ENCODE measurements at regions of chrX and their contacts with region 1.

Region 1: DNA sequence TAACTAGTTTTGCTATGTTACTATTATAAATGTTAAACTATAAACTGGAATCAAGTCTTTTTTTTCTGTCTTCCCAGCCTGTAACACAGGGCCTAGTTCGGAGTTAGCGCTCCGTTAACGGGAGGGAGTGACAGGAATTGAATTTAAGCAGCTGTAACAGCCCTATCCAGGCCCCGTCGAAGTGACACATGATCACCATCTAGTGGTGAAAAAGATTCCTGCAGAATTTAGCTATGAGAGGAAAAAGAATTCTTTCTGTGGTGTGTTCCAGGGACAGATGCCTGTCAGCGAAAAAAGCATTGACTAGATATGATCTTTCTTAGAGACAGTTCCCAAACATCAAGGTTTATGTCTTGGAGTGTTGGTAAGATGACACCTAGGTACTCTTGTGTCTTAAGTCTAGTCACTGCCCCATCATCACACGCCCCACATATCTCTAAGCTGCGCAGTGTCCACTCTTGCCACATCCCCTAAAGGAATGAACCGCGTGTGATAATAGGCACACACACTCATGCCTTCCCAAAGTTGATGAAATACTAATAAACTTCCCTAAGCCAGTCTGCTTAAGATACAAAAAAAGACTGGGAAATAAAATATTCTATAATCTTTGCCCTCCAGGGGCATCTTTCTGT is 2.0 kb downstream of the GAB3 start:
- DNase-seq: peak; percentile 50
- H3K4me3 Mint-ChIP-seq: peak overlapping the region; percentile 68
- H3K27ac Mint-ChIP-seq: peak overlapping the region; percentile 31
- H3K4me1 Mint-ChIP-seq: peaks cover 35% of the 10 kb centered on the region
- H3K27me3 Mint-ChIP-seq: peaks cover 8% of the 10 kb centered on the region

Region 2: GRCh38 chrX:154712781-154713740 is 35.8 kb before region 1 on chrX:
- CTCF ChIA-PET with region 1: interaction called, 71 read pairs
- POLR2A ChIA-PET with region 1: interaction called, 32 read pairs
- DNase-seq: peak; percentile 53
- H3K4me3 Mint-ChIP-seq: peak overlapping the region; percentile 52
- H3K27ac Mint-ChIP-seq: peak overlapping the region; percentile 88
- H3K4me1 Mint-ChIP-seq: peaks cover 64% of the 10 kb centered on the region
- H3K27me3 Mint-ChIP-seq: no peaks in the 10 kb centered on the region

Region 3: GRCh38 chrX:154727871-154728270 is 21.0 kb before region 1 on chrX:
- CTCF ChIA-PET with region 1: interaction called, 44 read pairs
- POLR2A ChIA-PET with region 1: interaction called, 20 read pairs
- DNase-seq: no peak
- H3K4me3 Mint-ChIP-seq: no peak overlapping the region
- H3K27ac Mint-ChIP-seq: no peak overlapping the region
- H3K4me1 Mint-ChIP-seq: peaks cover 96% of the 10 kb centered on the region
- H3K27me3 Mint-ChIP-seq: no peaks in the 10 kb centered on the region

Region 4: GRCh38 chrX:154734061-154734781 is 14.6 kb before region 1 on chrX:
- CTCF ChIA-PET with region 1: interaction called, 26 read pairs
- POLR2A ChIA-PET with region 1: interaction called, 20 read pairs
- DNase-seq: peak; percentile 46
- H3K4me3 Mint-ChIP-seq: peak overlapping the region; percentile 66
- H3K27ac Mint-ChIP-seq: peak overlapping the region; percentile 98
- H3K4me1 Mint-ChIP-seq: peaks cover 98% of the 10 kb centered on the region
- H3K27me3 Mint-ChIP-seq: no peaks in the 10 kb centered on the region

Region 5: GRCh38 chrX:154762523-154763289 is 13.9 kb after region 1 on chrX and contains the start of gene DKC1:
- CTCF ChIA-PET with region 1: interaction called, 10 read pairs
- POLR2A ChIA-PET with region 1: interaction called, 39 read pairs
- DNase-seq: peak; percentile 95
- H3K4me3 Mint-ChIP-seq: peak within 1 kb of the TSS; percentile 86
- H3K27ac Mint-ChIP-seq: peak within 1 kb of the TSS; percentile 86
- H3K4me1 Mint-ChIP-seq: peaks cover 44% of the 10 kb centered on the region
- H3K27me3 Mint-ChIP-seq: no peaks in the 10 kb centered on the region
- total RNA-seq, gene DKC1: 46.8 to 50.4 TPM

Region 6: DNA sequence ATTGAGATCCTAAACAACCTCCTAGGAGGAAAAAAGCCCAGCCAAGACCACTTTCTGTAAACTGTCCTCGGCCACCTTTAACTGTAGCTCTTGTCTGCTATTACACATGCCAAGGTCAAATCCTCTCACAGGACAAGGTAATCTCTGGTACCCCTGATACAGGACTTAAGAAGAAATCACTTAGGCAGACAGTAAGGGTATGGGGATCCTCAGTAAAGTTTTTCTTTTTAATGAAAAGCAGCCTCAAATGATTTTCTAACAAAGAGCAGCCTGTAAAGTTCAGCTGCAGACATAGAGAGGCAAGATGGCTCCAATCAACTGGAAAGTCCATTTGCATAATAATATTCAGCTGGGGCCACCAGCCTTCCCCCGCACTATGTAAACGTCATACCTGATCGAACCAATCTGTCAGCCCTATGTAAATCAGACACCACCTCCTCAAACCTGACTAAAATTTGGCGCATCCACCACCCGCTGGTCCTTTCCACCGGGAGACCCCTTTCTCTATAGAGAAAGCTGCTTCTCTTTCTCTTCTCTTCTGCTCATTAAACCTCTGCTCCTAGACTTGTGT is 71.0 kb after region 1 on chrX:
- CTCF ChIA-PET with region 1: no interaction called
- POLR2A ChIA-PET with region 1: no interaction called
- DNase-seq: no peak
- H3K4me3 Mint-ChIP-seq: no peak overlapping the region
- H3K27ac Mint-ChIP-seq: no peak overlapping the region
- H3K4me1 Mint-ChIP-seq: no peaks in the 10 kb centered on the region
- H3K27me3 Mint-ChIP-seq: peaks cover 8% of the 10 kb centered on the region

Measured in activated CD4-positive, alpha-beta memory T cell treated with anti-CD3 and anti-CD28 coated beads, Interleukin-2, amount 10 ng/mL, durations not matched to agents 7 days and 5 days (primary cell).